ENCODE measurements at regions of chr6 and their contacts with region 1.

Region 1: DNA sequence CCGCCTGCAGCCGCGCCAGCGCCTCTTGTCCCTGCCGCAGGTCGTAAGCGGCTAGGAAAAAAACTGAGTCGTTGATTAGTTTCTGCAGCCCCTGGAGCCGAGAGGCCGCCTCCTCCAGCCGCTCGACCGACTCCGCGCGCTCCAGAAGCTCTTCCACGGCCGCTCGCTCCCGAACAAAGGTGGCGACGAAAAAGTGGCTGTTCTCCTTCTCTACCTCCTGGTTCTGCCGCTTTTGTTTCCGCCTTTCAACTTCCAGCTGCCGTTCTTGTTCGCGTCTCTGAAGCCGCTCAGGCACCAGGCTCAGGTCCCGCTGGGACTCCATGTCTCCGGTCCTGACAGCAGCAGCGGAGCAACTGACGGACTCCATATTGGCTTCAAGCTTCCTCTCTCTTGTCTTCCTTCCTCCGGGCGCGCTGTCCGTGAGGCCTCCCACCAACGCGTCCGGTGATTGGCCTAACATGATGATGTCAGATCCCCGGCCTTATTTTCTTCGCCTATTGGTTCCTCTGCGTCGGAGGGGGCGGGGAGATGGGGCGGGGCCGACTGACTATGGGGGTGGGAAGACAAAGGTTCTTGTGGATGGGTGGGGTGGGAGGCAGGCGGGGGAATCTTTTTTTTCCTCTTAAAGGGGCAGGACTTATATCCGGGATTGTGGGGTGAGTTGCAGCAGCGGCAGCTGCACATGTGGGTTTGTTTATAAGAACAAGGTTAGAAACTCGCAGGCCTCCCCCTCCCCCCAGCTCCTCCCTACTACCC is at the start of gene TBCC:
- DNase-seq: peak; percentile 99
- H3K4me3 ChIP-seq: peak within 1 kb of the TSS; percentile 98
- H3K27ac ChIP-seq: peak within 1 kb of the TSS; percentile 97
- H3K4me1 ChIP-seq: peaks cover 42% of the 10 kb centered on the region
- H3K27me3 ChIP-seq: no peaks in the 10 kb centered on the region
- CTCF ChIP-seq: no peak
- total RNA-seq, gene TBCC: 29.4 and 31.3 TPM in 2 replicates

Region 2: GRCh38 chr6:42756722-42757121 is 10.8 kb after region 1 on chr6:
- CTCF ChIA-PET with region 1: interaction called, 11 read pairs
- POLR2A ChIA-PET with region 1: interaction called, 3 read pairs
- intact Hi-C with region 1: no loop called
- DNase-seq: no peak
- H3K4me3 ChIP-seq: no peak overlapping the region
- H3K27ac ChIP-seq: no peak overlapping the region
- H3K4me1 ChIP-seq: no peaks in the 10 kb centered on the region
- H3K27me3 ChIP-seq: no peaks in the 10 kb centered on the region
- CTCF ChIP-seq: no peak

Region 3: GRCh38 chr6:43082806-43083655 is 337.1 kb after region 1 on chr6:
- CTCF ChIA-PET with region 1: interaction called, 10 read pairs
- POLR2A ChIA-PET with region 1: no interaction called
- intact Hi-C with region 1: no loop called
- DNase-seq: no peak
- H3K4me3 ChIP-seq: no peak overlapping the region
- H3K27ac ChIP-seq: no peak overlapping the region
- H3K4me1 ChIP-seq: peaks cover 21% of the 10 kb centered on the region
- H3K27me3 ChIP-seq: no peaks in the 10 kb centered on the region
- CTCF ChIP-seq: no peak